ENCODE measurements at regions of chr2 and their contacts with region 1.

Region 1: DNA sequence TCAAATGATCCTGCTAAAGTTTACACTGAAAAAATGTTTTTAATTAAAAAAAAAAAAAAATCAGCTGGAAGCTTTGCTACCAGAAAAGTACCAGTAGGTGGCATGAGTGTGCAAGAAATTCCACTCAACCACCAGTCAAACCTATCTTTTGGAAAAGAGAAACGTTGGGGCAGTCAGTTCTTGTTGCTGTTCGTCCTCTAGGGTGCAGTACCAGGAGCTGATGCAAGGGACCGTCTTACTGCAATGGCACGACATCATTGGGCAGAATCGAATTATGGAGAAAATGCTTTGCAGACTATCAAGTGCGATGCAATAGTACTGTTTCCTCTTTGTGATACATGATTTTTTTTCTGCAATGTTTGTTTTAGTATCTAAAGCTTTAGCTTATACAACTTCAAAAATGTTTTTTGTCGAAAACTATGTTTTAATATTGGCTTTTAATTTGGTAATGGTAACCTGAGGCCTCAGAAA is 18.3 kb downstream of the YPEL5 start:
- DNase-seq: peak; percentile 96
- ATAC-seq: peak; percentile 95 to 99
- H3K4me3 ChIP-seq: no peak overlapping the region
- H3K27ac ChIP-seq: no peak overlapping the region
- H3K4me1 ChIP-seq: no peaks in the 10 kb centered on the region
- CTCF ChIP-seq: peak; percentile 100
- EP300 ChIP-seq: no peak
- POLR2A ChIP-seq: no peak
- RAD21 ChIP-seq: peak; percentile 97 to 98

Region 2: GRCh38 chr2:30048636-30049180 is 116.4 kb before region 1 on chr2:
- CTCF ChIA-PET with region 1: no interaction called
- POLR2A ChIA-PET with region 1: no interaction called
- DNase-seq: no peak
- ATAC-seq: no peak
- H3K4me3 ChIP-seq: no peak overlapping the region
- H3K27ac ChIP-seq: no peak overlapping the region
- H3K4me1 ChIP-seq: no peaks in the 10 kb centered on the region
- CTCF ChIP-seq: no peak
- EP300 ChIP-seq: no peak
- POLR2A ChIP-seq: no peak
- RAD21 ChIP-seq: no peak

Region 3: DNA sequence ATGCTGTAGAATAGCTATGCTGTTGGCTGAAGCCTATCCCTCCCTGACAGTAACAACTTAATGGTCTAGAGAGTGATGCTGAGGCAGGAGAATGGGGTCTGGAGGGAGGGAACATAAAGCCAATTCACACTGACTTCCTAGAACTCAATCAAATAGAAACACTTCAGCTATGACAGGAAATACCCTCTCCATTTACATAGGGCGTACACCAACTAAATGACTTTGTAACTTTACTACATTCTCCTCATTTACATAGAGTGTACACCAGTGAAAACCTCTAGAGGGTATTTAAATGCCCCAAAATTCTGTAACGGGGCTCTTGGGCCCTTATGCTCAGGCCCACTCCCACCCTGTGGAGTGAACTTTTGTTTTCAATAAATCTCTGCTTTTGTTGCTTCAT is 23.2 kb after region 1 on chr2:
- CTCF ChIA-PET with region 1: interaction called, 18 read pairs
- POLR2A ChIA-PET with region 1: no interaction called
- DNase-seq: no peak
- ATAC-seq: no peak
- H3K4me3 ChIP-seq: no peak overlapping the region
- H3K27ac ChIP-seq: no peak overlapping the region
- H3K4me1 ChIP-seq: peaks cover 11% of the 10 kb centered on the region; the same call in 2 of the 3 replicates
- CTCF ChIP-seq: no peak
- EP300 ChIP-seq: no peak
- POLR2A ChIP-seq: no peak
- RAD21 ChIP-seq: no peak

Region 4: GRCh38 chr2:30217644-30218337 is 52.7 kb after region 1 on chr2:
- CTCF ChIA-PET with region 1: interaction called, 149 read pairs
- POLR2A ChIA-PET with region 1: no interaction called
- DNase-seq: no peak
- ATAC-seq: no peak
- H3K4me3 ChIP-seq: no peak overlapping the region
- H3K27ac ChIP-seq: no peak overlapping the region
- H3K4me1 ChIP-seq: no peaks in the 10 kb centered on the region; the same call in 2 of the 3 replicates
- CTCF ChIP-seq: no peak
- EP300 ChIP-seq: no peak
- POLR2A ChIP-seq: no peak
- RAD21 ChIP-seq: no peak

Region 5: DNA sequence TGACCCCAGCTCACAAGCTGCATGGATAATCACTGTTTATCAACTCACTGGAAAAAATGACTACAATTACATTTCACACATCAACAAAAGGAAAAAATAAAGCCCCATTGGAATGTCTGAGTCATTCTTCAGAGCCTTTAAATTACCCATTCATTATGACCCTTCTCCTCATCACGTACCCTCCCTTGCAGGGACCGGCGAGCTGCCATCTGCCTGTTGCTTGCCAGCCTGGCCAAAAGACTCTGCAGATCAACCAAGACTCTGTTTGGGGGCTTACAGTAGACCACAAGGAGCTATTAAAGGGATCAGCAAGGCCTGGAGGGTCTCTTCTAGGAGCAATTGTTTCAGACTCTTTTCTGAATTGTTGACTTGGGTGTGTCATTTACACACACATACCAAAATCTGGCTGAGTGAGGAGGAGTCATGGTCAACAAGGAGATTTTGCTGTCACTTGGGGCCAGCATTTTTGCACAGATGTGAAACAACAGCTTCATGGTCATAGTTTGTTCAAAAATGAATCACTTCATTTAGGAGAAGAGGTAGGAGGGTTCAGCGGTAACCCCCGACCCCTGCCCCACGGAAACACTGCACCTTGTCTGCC is 108.3 kb after region 1 on chr2:
- CTCF ChIA-PET with region 1: interaction called, 11 read pairs
- POLR2A ChIA-PET with region 1: no interaction called
- DNase-seq: peak; percentile 44 to 91
- ATAC-seq: peak; percentile 28 to 53; a peak in 4 of 6 replicates
- H3K4me3 ChIP-seq: no peak overlapping the region
- H3K27ac ChIP-seq: peak overlapping the region; percentile 82 to 91
- H3K4me1 ChIP-seq: peaks cover 62% of the 10 kb centered on the region
- CTCF ChIP-seq: no peak
- EP300 ChIP-seq: peak; percentile 34 to 77; a peak in 3 of 5 replicates
- POLR2A ChIP-seq: no peak
- RAD21 ChIP-seq: peak; percentile 7 to 34; a peak in 3 of 5 replicates

Region 6: GRCh38 chr2:30702694-30703093 is 537.6 kb after region 1 on chr2:
- CTCF ChIA-PET with region 1: interaction called, 460 read pairs
- POLR2A ChIA-PET with region 1: interaction called, 3 read pairs
- DNase-seq: no peak
- ATAC-seq: no peak
- H3K4me3 ChIP-seq: no peak overlapping the region
- H3K27ac ChIP-seq: no peak overlapping the region
- H3K4me1 ChIP-seq: no peaks in the 10 kb centered on the region
- CTCF ChIP-seq: no peak
- EP300 ChIP-seq: no peak
- POLR2A ChIP-seq: no peak
- RAD21 ChIP-seq: no peak

Measured in A549 (cell line).